CD8-positive, alpha-beta T cell (primary cell): ENCODE measurements at regions of chr19 and their contacts with region 1.

Region 1: DNA sequence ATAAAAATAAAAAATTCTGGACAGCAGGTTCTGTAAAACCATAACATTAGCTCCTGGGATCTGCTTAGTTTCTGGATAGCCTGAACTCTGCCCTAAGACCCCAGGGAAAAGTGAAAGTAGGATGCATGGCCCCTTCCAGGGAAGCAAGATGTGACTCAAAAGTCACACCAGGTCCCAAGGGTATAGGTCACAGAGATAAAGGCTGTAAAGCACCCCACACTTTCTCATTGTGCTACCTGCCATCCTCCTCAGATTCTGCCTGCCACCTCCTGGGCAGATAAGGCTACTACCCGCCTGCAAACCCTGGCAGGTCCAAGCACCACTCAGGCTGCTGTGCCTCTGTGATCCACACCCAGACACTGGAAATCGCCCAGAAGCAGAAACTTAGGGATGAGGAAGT is 20.6 kb downstream of the FFAR2 start:
- DNase-seq: peak; percentile 40 to 83 (median 68)
- ATAC-seq: peak; percentile 100
- H3K4me3 ChIP-seq: no peak overlapping the region
- H3K4me3 Mint-ChIP-seq: no peak overlapping the region
- H3K27ac ChIP-seq: no peak overlapping the region
- H3K27ac Mint-ChIP-seq: no peak overlapping the region
- H3K4me1 ChIP-seq: peaks cover 3% of the 10 kb centered on the region
- H3K4me1 Mint-ChIP-seq: peaks cover 8% of the 10 kb centered on the region
- H3K27me3 ChIP-seq: no peaks in the 10 kb centered on the region
- H3K27me3 Mint-ChIP-seq: no peaks in the 10 kb centered on the region
- CTCF ChIP-seq: peak; percentile 68

Region 2: GRCh38 chr19:35269421-35270117 is 199.1 kb before region 1 on chr19:
- CTCF ChIA-PET with region 1: no interaction called
- POLR2A ChIA-PET with region 1: no interaction called
- intact Hi-C with region 1: loop called in 1 of 2 experiments (anchors 1 kb)
- DNase-seq: peak; percentile 57 to 88 (median 78)
- ATAC-seq: peak; percentile 47
- H3K4me3 ChIP-seq: peak overlapping the region in 1 of 2 experiments; percentile 62
- H3K4me3 Mint-ChIP-seq: peak overlapping the region; percentile 75
- H3K27ac ChIP-seq: no peak overlapping the region
- H3K27ac Mint-ChIP-seq: peak overlapping the region; percentile 80
- H3K4me1 ChIP-seq: peaks cover 25% of the 10 kb centered on the region
- H3K4me1 Mint-ChIP-seq: peaks cover 45% of the 10 kb centered on the region
- H3K27me3 ChIP-seq: no peaks in the 10 kb centered on the region
- H3K27me3 Mint-ChIP-seq: no peaks in the 10 kb centered on the region
- CTCF ChIP-seq: peak; percentile 64

Region 3: DNA sequence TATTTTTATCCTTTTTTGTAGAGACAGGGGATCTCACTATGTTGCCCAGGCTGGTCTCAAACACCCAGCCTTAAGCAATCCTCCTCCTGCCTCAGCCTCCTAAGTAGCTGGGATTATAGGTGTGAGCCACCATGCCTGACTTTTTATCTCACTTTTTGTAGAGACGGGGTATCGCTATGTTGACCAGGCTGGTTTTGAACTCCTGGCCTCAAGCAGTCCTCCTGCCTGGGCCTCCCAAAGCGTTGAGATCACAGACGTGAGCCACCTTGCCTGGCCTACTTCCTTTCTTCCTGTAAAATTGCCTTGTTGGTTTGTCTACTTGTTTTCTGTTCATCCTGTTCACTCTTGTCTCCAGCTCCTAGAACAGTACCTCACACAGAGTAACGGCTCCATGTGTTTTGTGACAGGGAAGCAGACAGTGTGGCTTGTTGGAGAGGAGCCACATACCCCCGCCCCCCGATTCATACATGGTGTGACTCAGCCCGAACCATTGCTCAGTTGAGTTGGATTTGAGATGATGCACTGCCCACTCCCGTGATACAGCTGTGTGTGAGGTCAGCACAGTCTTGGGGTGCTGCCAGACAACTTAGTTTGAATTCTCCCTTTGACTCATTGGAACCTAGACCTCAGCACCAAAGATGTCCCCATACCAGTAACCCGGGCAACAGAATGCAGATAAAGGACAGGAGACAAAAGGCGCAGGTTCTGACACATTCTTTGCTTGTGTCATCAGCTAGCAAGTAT is 63.6 kb before region 1 on chr19:
- CTCF ChIA-PET with region 1: interaction called, 5 read pairs
- POLR2A ChIA-PET with region 1: no interaction called
- intact Hi-C with region 1: loop called in 1 of 2 experiments (anchors 10 kb)
- DNase-seq: peak in 1 of 9 experiments; percentile 6
- ATAC-seq: no peak
- H3K4me3 ChIP-seq: no peak overlapping the region
- H3K4me3 Mint-ChIP-seq: no peak overlapping the region
- H3K27ac ChIP-seq: no peak overlapping the region
- H3K27ac Mint-ChIP-seq: no peak overlapping the region
- H3K4me1 ChIP-seq: no peaks in the 10 kb centered on the region
- H3K4me1 Mint-ChIP-seq: no peaks in the 10 kb centered on the region
- H3K27me3 ChIP-seq: no peaks in the 10 kb centered on the region
- H3K27me3 Mint-ChIP-seq: peaks cover 2% of the 10 kb centered on the region
- CTCF ChIP-seq: no peak

Region 4: DNA sequence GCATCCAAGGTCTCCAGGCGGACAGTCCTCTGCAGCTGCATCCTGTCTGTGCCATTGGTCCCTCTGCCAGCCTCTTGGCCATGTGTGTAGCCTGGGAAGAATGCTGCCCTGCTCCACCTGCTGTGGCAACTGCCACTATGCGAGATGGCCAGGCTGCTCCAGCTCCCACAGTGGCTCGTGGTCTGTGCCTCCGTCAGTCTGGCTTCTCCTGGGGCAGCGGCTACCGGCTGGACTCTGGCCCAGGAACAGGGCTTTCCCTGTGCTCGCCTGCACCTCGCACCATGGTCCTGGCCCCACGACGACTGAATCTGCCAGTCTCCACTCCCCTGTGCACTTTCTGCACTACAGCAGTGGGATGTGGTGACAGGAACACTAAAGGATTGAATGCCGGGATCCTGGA is 47.3 kb before region 1 on chr19:
- CTCF ChIA-PET with region 1: interaction called, 5 read pairs
- POLR2A ChIA-PET with region 1: no interaction called
- intact Hi-C with region 1: loop called in 1 of 2 experiments (anchors 2 kb)
- DNase-seq: no peak
- ATAC-seq: no peak
- H3K4me3 ChIP-seq: no peak overlapping the region
- H3K4me3 Mint-ChIP-seq: no peak overlapping the region
- H3K27ac ChIP-seq: no peak overlapping the region
- H3K27ac Mint-ChIP-seq: no peak overlapping the region
- H3K4me1 ChIP-seq: no peaks in the 10 kb centered on the region
- H3K4me1 Mint-ChIP-seq: no peaks in the 10 kb centered on the region
- H3K27me3 ChIP-seq: no peaks in the 10 kb centered on the region
- H3K27me3 Mint-ChIP-seq: peaks cover 13% of the 10 kb centered on the region
- CTCF ChIP-seq: no peak

Region 5: DNA sequence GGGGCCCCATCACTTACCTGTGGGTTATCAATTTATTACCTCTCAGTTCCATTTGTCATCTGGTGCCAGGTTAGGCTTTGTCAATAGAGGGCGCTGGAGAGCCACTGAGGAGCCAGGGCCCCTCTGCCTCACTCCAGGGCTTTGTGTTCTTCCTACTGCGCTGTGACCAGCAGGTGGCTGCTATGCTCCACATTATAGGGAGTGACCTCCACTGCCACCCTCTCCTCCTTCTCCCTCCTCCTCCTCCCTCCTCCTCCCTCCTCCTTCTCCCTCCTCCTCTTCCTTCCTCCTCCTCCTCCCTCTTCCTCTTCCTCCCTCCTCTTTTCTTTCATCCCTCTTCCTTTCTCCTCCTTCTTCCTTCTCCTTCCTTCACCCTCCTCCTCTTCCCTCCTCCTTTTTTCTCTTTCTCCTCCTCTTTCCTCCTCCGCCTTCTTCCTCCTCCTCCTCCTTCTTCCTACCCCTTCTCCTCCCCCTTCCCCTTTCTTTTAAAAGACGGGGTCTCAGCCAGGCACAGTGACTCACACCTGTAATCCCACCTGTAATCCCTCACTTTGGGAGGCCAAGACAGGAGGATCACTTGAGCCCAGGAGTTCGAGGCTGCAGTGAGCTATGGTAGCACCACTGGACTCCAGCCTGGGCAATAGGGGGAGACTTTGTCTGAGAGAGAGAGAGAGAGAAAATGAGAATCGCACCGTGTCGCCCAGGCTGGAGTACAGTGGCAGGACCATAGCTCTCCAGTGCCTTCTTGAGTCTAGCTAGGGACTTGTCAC is 225.4 kb after region 1 on chr19:
- CTCF ChIA-PET with region 1: no interaction called
- POLR2A ChIA-PET with region 1: no interaction called
- intact Hi-C with region 1: no loop called
- DNase-seq: peak; percentile 80 to 94 (median 91)
- ATAC-seq: peak; percentile 100
- H3K4me3 ChIP-seq: no peak overlapping the region
- H3K4me3 Mint-ChIP-seq: no peak overlapping the region
- H3K27ac ChIP-seq: no peak overlapping the region
- H3K27ac Mint-ChIP-seq: no peak overlapping the region
- H3K4me1 ChIP-seq: no peaks in the 10 kb centered on the region
- H3K4me1 Mint-ChIP-seq: no peaks in the 10 kb centered on the region
- H3K27me3 ChIP-seq: no peaks in the 10 kb centered on the region
- H3K27me3 Mint-ChIP-seq: no peaks in the 10 kb centered on the region
- CTCF ChIP-seq: peak; percentile 99

Region 6: GRCh38 chr19:35868172-35868822 is 399.7 kb after region 1 on chr19 and contains the start of gene APLP1:
- CTCF ChIA-PET with region 1: no interaction called
- POLR2A ChIA-PET with region 1: no interaction called
- intact Hi-C with region 1: no loop called
- DNase-seq: peak in 8 of 9 experiments; percentile 43 to 75 (median 62)
- ATAC-seq: peak; percentile 63
- H3K4me3 ChIP-seq: peak within 1 kb of the TSS in 1 of 2 experiments; percentile 32
- H3K4me3 Mint-ChIP-seq: peak within 1 kb of the TSS; percentile 74
- H3K27ac ChIP-seq: no peak within 1 kb of the TSS
- H3K27ac Mint-ChIP-seq: no peak within 1 kb of the TSS
- H3K4me1 ChIP-seq: peaks cover 21% of the 10 kb centered on the region
- H3K4me1 Mint-ChIP-seq: peaks cover 15% of the 10 kb centered on the region
- H3K27me3 ChIP-seq: peaks cover 24 to 30% of the 10 kb centered on the region in 2 experiments
- H3K27me3 Mint-ChIP-seq: peaks cover 33% of the 10 kb centered on the region
- CTCF ChIP-seq: no peak
- total RNA-seq, gene APLP1: not detected

Region 7: DNA sequence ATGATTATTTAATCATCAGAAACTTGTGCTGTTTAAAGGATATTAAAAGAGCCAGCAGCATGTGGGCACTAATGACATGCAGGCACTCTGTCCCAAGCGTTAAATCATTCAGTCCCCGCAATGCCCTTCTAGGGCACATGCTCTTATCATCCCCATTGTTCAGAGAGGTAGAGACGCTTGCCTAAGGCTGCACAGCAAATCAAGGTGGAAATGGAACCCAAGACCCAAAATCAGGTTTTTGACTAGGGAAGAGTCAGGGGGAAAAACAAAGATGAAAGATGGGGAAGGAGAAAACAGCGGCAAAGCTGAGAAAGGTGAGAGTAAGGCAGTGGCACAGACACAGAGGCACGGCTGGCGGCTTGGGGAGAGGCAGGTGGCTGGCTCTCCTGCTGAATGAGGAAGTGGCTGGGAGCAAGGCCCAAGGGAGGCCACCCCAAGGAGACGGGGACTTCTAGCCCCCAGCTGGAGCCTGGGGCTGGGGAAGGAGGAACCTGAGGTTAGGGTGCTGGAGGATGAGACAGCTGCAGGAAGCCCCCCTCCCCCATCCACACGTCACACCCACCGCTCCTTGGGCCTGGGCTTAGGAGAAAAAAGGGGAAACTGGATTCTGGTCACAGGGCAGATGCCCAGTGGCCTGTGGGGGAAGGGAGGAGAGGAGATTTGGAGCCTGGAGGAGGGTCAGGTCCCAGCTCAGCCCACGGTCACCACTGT is 440.5 kb after region 1 on chr19:
- CTCF ChIA-PET with region 1: no interaction called
- POLR2A ChIA-PET with region 1: no interaction called
- intact Hi-C with region 1: no loop called
- DNase-seq: peak in 3 of 9 experiments; percentile 27 to 64 (median 29)
- ATAC-seq: no peak
- H3K4me3 ChIP-seq: no peak overlapping the region
- H3K4me3 Mint-ChIP-seq: peak overlapping the region; percentile 27
- H3K27ac ChIP-seq: peak overlapping the region in 1 of 2 experiments; percentile 59
- H3K27ac Mint-ChIP-seq: peak overlapping the region; percentile 67
- H3K4me1 ChIP-seq: peaks cover 28% of the 10 kb centered on the region
- H3K4me1 Mint-ChIP-seq: peaks cover 36% of the 10 kb centered on the region
- H3K27me3 ChIP-seq: no peaks in the 10 kb centered on the region
- H3K27me3 Mint-ChIP-seq: no peaks in the 10 kb centered on the region
- CTCF ChIP-seq: no peak